Ascending aorta (tissue), 2 donors: ENCODE measurements at regions of chr10 and their contacts with region 1.

Region 1: GRCh38 chr10:94213001-94213530 is 149.7 kb downstream of the NOC3L start:
- DNase-seq: peak in 1 of 2 donors; percentile 80
- H3K4me3 ChIP-seq: no peak overlapping the region
- H3K27ac ChIP-seq: peak overlapping the region; percentile 72 to 81
- H3K4me1 ChIP-seq: peaks cover 0 to 54% of the 10 kb centered on the region in 2 donors
- H3K27me3 ChIP-seq: no peaks in the 10 kb centered on the region
- CTCF ChIP-seq: no peak

Region 2: DNA sequence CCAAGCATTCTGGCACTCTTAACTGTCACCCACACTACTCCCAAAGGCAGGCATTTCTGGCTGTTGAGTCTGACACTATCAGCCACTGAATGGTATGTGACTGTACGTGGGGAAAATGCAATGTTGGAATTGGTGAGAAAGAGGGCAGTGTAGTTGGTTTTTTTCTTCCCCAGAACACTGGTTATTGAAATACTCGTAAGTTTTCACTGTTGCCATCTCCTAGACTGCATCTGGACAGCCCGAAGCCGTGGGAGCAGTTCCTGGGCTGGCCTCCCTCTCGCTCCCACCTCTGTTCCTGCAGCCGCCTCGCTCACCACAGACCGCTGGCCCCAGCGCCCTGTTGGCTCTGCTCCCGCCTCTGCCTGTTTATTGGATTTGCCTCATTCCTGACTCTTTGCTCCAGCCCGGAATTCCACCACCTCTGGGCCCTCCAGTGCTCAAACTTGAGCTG is 213.6 kb before region 1 on chr10:
- intact Hi-C with region 1: loop called (anchors 5 kb)
- DNase-seq: peak in 1 of 2 donors; percentile 84
- H3K4me3 ChIP-seq: peak overlapping the region in 1 of 2 donors; percentile 18
- H3K27ac ChIP-seq: peak overlapping the region; percentile 66 to 89
- H3K4me1 ChIP-seq: peaks cover 0 to 20% of the 10 kb centered on the region in 2 donors
- H3K27me3 ChIP-seq: no peaks in the 10 kb centered on the region
- CTCF ChIP-seq: peak in 1 of 3 experiments; percentile 12

Region 3: DNA sequence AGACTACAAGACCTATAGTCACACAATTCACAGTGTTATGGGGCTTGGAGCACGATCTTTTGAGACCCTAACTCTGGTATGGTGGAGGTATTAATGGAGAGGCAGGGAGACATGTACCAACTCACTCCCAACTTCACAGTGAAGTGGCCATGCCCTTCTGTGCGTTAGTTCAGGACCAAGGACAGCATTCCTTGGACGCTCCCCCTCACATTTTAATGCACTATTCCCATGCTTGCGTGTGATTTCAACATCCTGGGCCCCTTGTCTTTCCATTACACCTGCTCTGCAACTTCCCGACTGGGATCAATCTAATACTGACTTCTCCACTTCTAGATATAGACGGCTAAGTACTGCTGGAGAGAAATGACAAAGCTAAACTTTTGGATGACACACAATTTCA is 146.7 kb before region 1 on chr10:
- intact Hi-C with region 1: no loop called
- DNase-seq: no peak
- H3K4me3 ChIP-seq: no peak overlapping the region
- H3K27ac ChIP-seq: no peak overlapping the region
- H3K4me1 ChIP-seq: no peaks in the 10 kb centered on the region
- H3K27me3 ChIP-seq: no peaks in the 10 kb centered on the region
- CTCF ChIP-seq: no peak

Region 4: GRCh38 chr10:94097656-94098055 is 115.4 kb before region 1 on chr10:
- intact Hi-C with region 1: loop called (anchors 5 kb)
- DNase-seq: peak in 1 of 2 donors; percentile 72
- H3K4me3 ChIP-seq: no peak overlapping the region
- H3K27ac ChIP-seq: peak overlapping the region; percentile 61 to 92
- H3K4me1 ChIP-seq: peaks cover 2 to 55% of the 10 kb centered on the region in 2 donors
- H3K27me3 ChIP-seq: no peaks in the 10 kb centered on the region
- CTCF ChIP-seq: no peak

Region 5: DNA sequence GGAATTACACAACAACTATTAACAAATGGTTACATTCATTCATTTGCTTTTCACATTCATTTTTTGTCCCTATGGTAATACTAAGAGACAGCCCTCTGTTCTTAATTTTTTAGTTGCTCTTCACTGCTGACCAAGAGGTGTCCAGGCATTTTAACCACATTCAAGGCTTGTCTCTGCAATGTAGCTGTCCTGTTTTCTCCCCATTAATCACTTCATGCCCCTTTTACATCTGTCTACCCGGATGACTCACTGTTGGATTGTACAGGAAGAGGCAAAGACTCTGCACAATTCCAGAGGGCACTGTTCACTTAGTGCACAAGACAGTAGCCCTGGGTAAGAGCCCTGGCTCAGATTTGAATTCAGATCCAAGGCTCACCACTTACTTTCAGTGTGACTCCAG is 18.8 kb before region 1 on chr10:
- intact Hi-C with region 1: loop called (anchors 2 kb)
- DNase-seq: no peak
- H3K4me3 ChIP-seq: no peak overlapping the region
- H3K27ac ChIP-seq: peak overlapping the region in 1 of 2 donors; percentile 9
- H3K4me1 ChIP-seq: peaks cover 0 to 17% of the 10 kb centered on the region in 2 donors
- H3K27me3 ChIP-seq: no peaks in the 10 kb centered on the region
- CTCF ChIP-seq: no peak

Region 6: DNA sequence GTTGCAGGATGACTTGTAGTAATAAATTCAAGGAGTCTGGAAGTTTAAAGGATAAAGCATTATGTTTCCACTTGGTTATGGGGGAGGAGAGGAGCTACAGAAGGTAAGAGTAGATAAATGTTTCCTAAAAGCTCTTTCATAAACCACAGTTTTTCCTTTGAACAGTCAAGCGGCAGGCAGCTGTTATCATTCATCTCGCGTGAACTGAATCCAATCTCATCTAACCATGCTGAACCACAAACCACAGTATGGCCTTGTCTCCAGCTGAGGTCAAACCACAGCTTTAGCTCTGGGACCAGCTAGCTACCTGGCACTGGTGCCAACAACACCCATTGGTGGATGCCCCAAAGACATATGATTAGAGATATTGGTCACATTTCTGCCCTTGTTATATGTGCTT is 86.4 kb after region 1 on chr10:
- intact Hi-C with region 1: no loop called
- DNase-seq: no peak
- H3K4me3 ChIP-seq: no peak overlapping the region
- H3K27ac ChIP-seq: no peak overlapping the region
- H3K4me1 ChIP-seq: no peaks in the 10 kb centered on the region
- H3K27me3 ChIP-seq: no peaks in the 10 kb centered on the region
- CTCF ChIP-seq: no peak

Region 7: GRCh38 chr10:94383530-94383929 is 170.5 kb after region 1 on chr10:
- intact Hi-C with region 1: no loop called
- DNase-seq: no peak
- H3K4me3 ChIP-seq: no peak overlapping the region
- H3K27ac ChIP-seq: no peak overlapping the region
- H3K4me1 ChIP-seq: no peaks in the 10 kb centered on the region
- H3K27me3 ChIP-seq: no peaks in the 10 kb centered on the region
- CTCF ChIP-seq: no peak